Dorsolateral prefrontal cortex (tissue), 120 donors: ENCODE measurements at regions of chr5 and their contacts with region 1.

Region 1: GRCh38 chr5:36739751-36740221 is 133.4 kb downstream of the SLC1A3 start:
- DNase-seq: peak in 7 of 10 donors; percentile 9 to 72 (median 46)
- H3K4me3 ChIP-seq: peak overlapping the region in 2 of 59 donors; percentile 24 to 37
- H3K27ac ChIP-seq: no peak overlapping the region
- H3K27me3 ChIP-seq: peaks cover 0 to 34% (median 4%) of the 10 kb centered on the region in 45 donors
- CTCF ChIP-seq: peak in 55 of 56 donors; percentile 59 to 87 (median 73)

Region 2: DNA sequence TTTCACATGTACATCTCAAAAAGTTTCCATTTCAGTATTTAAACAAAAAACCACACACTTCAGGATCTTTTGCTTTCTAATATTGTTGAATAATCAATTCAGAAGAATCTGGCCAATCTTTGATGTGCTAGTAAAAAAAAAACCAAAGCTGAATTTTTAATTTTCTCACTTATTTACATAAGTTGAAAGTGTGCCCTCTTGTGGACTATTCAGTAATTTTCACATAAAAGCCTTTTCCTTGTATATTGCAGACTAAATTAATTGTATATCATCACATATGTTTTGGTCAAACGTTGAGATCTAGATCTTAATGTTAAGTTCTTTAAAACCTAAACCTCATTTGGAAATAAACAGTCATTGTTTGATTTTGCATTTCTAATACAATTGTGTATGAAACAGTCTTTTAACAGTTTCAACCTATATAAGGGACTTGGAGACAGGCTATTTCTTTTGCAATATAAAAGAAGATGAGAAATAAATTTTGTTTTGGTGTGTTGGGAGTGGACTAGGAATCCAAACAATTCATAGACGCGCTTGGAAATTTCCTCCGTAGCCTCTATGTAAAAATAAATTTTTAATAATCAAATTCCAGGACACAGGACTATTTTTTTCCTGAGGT is 204.9 kb after region 1 on chr5:
- intact Hi-C with region 1: loop called in 1 of 2 experiments (anchors 10 kb)
- DNase-seq: no peak
- H3K4me3 ChIP-seq: no peak overlapping the region
- H3K27ac ChIP-seq: peak overlapping the region in 3 of 59 donors; percentile 12 to 72 (median 64)
- H3K27me3 ChIP-seq: no peaks in the 10 kb centered on the region
- CTCF ChIP-seq: peak; percentile 49 to 88 (median 68)

Region 3: DNA sequence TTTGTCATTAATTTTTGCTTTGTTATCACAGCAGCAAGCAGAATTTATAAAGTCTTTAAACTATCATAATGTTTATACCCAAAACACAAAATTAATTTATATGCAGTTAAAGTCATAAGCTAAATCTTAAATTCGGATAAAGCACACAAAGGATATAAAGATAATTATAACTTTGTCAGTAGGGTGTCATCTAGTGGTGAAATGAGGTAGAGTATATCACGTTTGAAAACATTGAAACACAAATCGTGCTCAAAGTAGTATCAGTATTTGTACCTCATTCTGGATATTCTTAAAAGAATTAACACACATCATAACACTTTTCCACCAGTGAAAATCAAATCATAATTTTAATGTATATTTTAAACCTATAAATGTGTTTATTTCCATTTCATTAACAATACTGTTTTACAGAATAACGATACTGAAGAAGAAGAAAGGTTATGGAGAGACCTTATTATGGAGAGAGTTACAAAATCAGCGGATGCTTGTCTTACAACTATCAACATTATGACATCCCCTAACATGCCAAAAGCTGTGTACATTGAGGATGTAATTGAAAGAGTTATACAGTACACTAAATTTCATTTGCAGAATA is 266.3 kb after region 1 on chr5:
- intact Hi-C with region 1: loop called (anchors 5 to 10 kb)
- DNase-seq: no peak
- H3K4me3 ChIP-seq: no peak overlapping the region
- H3K27ac ChIP-seq: peak overlapping the region in 2 of 59 donors; percentile 10 to 13
- H3K27me3 ChIP-seq: no peaks in the 10 kb centered on the region
- CTCF ChIP-seq: peak; percentile 55 to 84 (median 73)